ENCODE measurements at regions of chr6 and their contacts with region 1.

Region 1: DNA sequence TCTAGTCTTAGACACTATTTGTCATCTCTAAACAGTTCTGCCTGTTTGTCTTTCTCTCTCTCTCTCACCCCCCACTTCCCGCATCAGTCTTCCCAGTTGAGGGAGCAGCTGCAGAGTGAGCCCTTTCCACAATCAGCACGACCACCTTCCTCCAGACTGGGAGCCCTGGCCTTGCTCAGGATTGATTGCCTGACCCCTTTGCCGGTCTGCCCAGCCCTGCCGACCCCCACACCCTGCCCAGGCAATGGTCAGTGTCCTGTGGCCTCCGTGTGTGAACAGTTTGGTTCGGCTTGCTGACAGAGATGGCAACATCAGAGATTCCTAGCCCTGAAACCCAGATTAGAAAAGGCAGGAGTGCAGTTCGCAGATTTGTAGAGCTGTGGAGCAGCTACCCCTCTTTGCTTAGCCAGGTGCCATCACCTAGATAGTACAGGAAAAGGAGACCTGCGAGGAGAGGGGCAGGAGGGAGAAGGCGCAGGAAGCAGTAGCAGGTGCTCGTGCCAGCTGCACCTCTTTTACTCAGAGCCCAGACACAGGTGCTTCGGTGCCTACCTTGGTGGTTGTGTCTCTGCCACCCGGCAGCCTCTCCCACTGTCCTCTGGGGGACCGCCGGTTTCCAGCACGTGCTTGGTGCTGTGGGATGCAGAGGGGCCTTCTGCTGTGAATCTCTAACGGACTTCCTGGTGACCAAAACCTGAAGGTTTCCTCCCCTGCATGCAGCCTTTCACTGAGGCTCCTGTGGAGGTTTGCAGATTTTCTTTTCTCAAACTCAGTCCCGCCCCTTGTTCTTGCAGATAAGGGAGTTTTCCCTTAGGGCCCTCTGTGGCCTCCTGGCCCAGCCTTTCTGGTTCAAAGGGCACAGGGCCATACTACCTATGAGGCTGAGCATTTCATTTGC is 92.4 kb downstream of the SCML4 start:
- DNase-seq: no peak

Region 2: DNA sequence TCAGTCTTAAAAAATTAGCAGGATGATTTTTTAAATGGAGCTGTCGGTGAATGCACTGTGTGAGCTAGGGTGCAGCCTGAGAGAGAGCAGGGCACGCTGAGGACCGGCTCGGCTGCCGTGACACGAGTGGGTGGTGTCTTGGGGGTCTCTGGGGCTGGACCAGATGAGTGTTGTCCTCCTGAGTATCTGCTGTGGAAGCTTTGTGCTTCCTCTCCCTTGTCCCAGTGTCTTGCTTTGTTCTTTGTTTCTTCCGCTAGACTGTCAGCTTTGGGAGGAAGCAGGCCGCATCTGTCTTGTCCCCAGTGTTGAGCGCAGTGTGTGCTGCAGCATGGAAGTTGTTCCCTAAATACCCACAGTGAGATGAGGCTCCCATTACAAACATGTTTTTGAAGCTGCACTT is 1191.7 kb before region 1 on chr6:
- intact Hi-C with region 1: loop called in 1 of 2 experiments (anchors 5 kb)
- DNase-seq: no peak

Region 3: DNA sequence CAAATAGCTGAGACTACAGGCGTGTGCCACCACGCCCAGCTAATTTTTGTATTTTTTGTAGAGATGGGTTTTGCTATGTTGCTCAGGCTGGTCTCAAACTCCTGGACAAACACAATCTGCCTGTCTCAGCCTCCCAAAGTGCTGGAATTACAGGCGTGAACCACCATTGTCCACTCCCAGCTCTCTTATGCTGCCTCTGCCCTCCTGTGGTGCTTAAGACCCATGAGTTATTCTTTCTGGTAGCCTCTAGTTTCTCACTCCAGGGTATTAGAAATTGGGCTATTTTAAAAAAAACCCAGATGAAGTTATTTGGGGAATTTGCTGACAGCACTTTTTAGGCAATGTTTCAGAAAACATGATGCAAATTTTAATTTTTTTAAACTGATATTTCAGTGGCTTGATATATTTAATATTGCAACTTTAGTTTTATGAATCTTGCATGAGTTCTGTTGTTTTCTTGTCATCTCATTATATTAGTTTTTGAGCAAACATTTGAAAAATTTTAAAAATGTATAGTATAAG is 715.0 kb after region 1 on chr6:
- intact Hi-C with region 1: no loop called
- DNase-seq: no peak

Measured in posterior vena cava (tissue), 2 donors.